Activated CD4-positive, alpha-beta T cell treated with anti-CD3 and anti-CD28 coated beads, Interleukin-2, amount 10 ng/mL, durations not matched to agents 7 days and 5 days (primary cell): ENCODE measurements at regions of chr17 and their contacts with region 1.

Region 1: GRCh38 chr17:50949989-50950881 is 84.1 kb upstream of the TOB1 start:
- DNase-seq: peak; percentile 55
- H3K4me3 Mint-ChIP-seq: no peak overlapping the region
- H3K27ac Mint-ChIP-seq: no peak overlapping the region
- H3K4me1 Mint-ChIP-seq: peaks cover 52% of the 10 kb centered on the region
- H3K27me3 Mint-ChIP-seq: no peaks in the 10 kb centered on the region

Region 2: GRCh38 chr17:50935201-50935995 is 14.8 kb before region 1 on chr17:
- CTCF ChIA-PET with region 1: interaction called, 13 read pairs
- POLR2A ChIA-PET with region 1: no interaction called
- DNase-seq: no peak
- H3K4me3 Mint-ChIP-seq: no peak overlapping the region
- H3K27ac Mint-ChIP-seq: no peak overlapping the region
- H3K4me1 Mint-ChIP-seq: peaks cover 17% of the 10 kb centered on the region
- H3K27me3 Mint-ChIP-seq: peaks cover 4% of the 10 kb centered on the region

Region 3: GRCh38 chr17:50967795-50968194 is 17.6 kb after region 1 on chr17:
- CTCF ChIA-PET with region 1: no interaction called
- POLR2A ChIA-PET with region 1: no interaction called
- DNase-seq: no peak
- H3K4me3 Mint-ChIP-seq: no peak overlapping the region
- H3K27ac Mint-ChIP-seq: no peak overlapping the region
- H3K4me1 Mint-ChIP-seq: peaks cover 12% of the 10 kb centered on the region
- H3K27me3 Mint-ChIP-seq: no peaks in the 10 kb centered on the region